Cardiac septum (tissue), 1 donor: ENCODE measurements at regions of chr2 and their contacts with region 1.

Region 1: GRCh38 chr2:68196120-68196716 is 38.5 kb downstream of the PNO1 start:
- DNase-seq: no peak

Region 2: GRCh38 chr2:68121873-68122679 is 74.1 kb before region 1 on chr2:
- intact Hi-C with region 1: loop called (anchors 10 kb)
- DNase-seq: peak; percentile 91

Region 3: DNA sequence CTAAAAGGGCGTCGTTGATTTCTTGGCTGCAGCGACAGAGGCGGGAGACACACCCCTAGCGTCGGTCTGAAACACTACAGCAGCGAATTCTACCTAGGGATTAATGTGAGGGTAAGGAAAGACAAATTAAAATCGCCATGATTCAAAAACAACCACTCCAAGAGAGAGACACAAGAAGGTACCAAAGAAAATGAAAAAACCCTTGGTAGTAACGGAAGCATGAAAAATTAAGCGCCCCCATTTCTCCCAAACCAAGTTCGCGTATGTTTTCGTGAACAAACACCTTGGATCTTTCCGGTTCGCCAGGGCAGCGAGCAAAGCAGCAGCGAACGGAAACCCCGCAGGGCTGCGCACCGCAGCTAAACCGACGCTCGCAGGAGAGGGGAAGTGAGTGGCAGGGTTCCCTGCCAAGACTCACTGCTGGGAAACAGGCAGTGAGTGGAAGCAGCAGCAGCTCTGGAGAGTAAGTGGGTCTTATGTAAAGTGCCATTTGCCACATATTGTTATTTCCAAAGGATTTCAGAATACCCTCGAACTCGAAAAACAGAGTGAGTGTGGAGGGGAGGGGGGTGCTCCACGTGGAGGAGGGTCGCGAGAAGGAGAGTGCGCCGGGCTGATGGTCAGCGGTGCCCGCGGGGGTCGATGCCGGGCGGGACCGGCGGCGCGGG is 55.1 kb after region 1 on chr2:
- intact Hi-C with region 1: loop called (anchors 2 kb)
- DNase-seq: peak; percentile 82

Region 4: DNA sequence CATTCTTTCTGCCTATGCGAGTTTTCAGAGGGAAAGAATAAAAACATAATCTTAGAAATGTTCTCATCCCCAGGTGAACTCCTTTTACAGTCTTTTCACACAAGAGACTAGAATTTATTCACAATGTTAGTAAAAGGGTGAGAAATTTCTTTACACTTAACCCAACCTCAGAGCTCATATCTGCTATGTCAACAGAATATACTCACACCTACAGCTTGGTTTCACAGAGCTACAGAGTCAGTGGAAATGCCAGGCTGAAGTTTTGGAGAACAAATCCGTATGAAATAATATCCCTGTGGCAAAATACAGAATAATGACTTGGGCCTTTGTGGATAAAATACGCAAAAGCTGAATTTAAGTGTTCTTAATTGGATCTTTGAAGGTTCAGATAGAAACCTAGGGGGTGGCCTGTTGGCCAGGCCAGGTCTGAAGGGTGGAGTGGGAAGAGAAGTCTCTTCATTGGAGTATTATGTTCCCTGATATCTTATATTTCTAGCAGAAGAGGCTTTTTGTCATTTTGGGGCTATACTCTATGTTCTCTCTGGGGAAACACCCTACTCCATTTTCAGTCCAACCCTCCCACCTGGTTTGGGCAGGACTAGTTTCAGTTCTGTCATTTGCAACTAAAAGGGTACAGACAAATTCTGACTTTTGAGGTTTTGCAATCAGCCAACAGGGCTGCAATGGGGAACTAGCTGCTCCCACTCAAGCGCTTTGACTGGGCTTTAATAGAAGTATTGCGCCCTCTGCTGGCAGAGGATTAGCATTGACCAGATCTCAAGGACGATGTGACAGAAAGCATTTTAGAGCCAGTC is 245.2 kb after region 1 on chr2:
- intact Hi-C with region 1: loop called (anchors 10 kb)
- DNase-seq: peak; percentile 88